ENCODE measurements at regions of chr12 and their contacts with region 1.

Region 1: GRCh38 chr12:52582971-52583456 is 9.4 kb upstream of the KRT74 start:
- DNase-seq: peak in 2 of 3 donors; percentile 24 to 73
- ATAC-seq: peak; percentile 65 to 80
- H3K4me3 ChIP-seq: no peak overlapping the region
- H3K27ac ChIP-seq: no peak overlapping the region
- H3K4me1 ChIP-seq: no peaks in the 10 kb centered on the region
- H3K27me3 ChIP-seq: no peaks in the 10 kb centered on the region

Region 2: GRCh38 chr12:52865090-52865944 is 282.3 kb after region 1 on chr12:
- intact Hi-C with region 1: loop called in 3 of 4 experiments (anchors 2 to 5 kb)
- DNase-seq: peak; percentile 48 to 83 (median 80)
- ATAC-seq: peak; percentile 68 to 79
- H3K4me3 ChIP-seq: no peak overlapping the region
- H3K27ac ChIP-seq: no peak overlapping the region
- H3K4me1 ChIP-seq: no peaks in the 10 kb centered on the region
- H3K27me3 ChIP-seq: no peaks in the 10 kb centered on the region

Region 3: DNA sequence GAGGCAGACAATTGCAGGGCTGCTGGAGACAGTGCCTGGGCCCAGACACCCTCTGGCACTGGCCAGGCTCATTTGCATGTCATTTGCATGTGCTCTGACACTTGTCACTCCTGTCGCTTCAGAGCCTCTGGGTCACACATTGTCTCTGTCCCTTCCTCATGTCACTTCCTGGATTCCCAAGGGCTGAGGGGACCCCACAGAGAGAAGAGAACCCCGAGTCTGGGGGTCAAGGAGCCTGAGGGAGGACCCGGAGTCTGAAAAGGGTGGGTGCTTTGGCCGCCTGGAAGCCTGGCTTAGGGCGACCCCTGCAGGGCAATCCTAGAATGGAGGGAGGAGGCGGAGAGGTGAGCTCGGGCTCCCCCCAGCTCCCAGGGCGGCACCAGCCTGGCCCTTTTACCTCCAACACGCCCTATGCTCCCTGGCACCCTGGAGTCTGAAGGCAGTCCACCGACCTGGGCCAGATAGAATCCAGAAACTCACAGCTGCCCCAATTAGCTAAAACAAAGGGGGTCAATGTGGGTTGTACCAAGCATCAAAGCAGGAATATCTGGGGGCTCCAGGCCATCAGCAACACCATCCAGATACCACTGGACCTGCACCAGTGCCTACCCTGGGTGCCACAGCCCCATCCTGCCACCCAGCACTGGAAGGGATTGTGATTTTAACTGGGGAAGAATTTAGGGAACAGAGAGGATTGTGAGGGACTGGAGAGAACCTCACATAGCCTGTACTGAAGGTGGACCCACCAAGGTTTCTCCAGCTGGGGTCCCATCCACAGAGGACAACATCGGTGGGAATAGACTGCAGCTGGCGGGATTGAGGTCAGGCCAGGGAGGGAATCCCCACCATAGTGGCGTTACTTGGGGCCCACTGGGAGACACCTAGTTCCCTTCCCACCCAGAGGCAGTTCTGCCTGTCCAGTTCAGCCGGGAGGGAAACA is 287.6 kb after region 1 on chr12:
- intact Hi-C with region 1: loop called in 3 of 4 experiments (anchors 2 to 5 kb)
- DNase-seq: peak; percentile 58 to 84 (median 83)
- ATAC-seq: peak in 1 of 2 donors; percentile 22
- H3K4me3 ChIP-seq: no peak overlapping the region
- H3K27ac ChIP-seq: no peak overlapping the region
- H3K4me1 ChIP-seq: peaks cover 6% of the 10 kb centered on the region
- H3K27me3 ChIP-seq: no peaks in the 10 kb centered on the region

Region 4: GRCh38 chr12:52879394-52880351 is 296.7 kb after region 1 on chr12:
- intact Hi-C with region 1: loop called in 2 of 4 experiments (anchors 5 kb)
- DNase-seq: peak; percentile 76 to 91 (median 89)
- ATAC-seq: peak; percentile 86
- H3K4me3 ChIP-seq: no peak overlapping the region
- H3K27ac ChIP-seq: no peak overlapping the region
- H3K4me1 ChIP-seq: no peaks in the 10 kb centered on the region
- H3K27me3 ChIP-seq: no peaks in the 10 kb centered on the region

Measured in right cardiac atrium (tissue), 5 donors.